ENCODE measurements at regions of chr9 and their contacts with region 1.

Region 1: GRCh38 chr9:68895741-68896478 is 118.0 kb downstream of the PRKACG start:
- DNase-seq: peak in 7 of 9 donors; percentile 26 to 79 (median 70)
- ATAC-seq: peak; percentile 81
- H3K4me3 ChIP-seq: peak overlapping the region; percentile 15
- H3K4me3 Mint-ChIP-seq: peak overlapping the region; percentile 3 to 89 (median 77)
- H3K27ac ChIP-seq: peak overlapping the region; percentile 64
- H3K27ac Mint-ChIP-seq: peak overlapping the region; percentile 86 to 95 (median 91)
- H3K4me1 ChIP-seq: peaks cover 0 to 26% of the 10 kb centered on the region in 2 donors
- H3K4me1 Mint-ChIP-seq: peaks cover 33 to 68% (median 62%) of the 10 kb centered on the region in 7 donors
- H3K27me3 ChIP-seq: no peaks in the 10 kb centered on the region
- H3K27me3 Mint-ChIP-seq: no peaks in the 10 kb centered on the region

Region 2: GRCh38 chr9:68844631-68845612 is 51.0 kb before region 1 on chr9:
- CTCF ChIA-PET with region 1: no interaction called
- POLR2A ChIA-PET with region 1: no interaction called
- intact Hi-C with region 1: loop called in 1 of 2 experiments (anchors 5 kb)
- DNase-seq: peak in 1 of 9 donors; percentile 15
- ATAC-seq: peak; percentile 57
- H3K4me3 ChIP-seq: no peak overlapping the region
- H3K4me3 Mint-ChIP-seq: peak overlapping the region in 3 of 10 donors; percentile 15 to 43 (median 17)
- H3K27ac ChIP-seq: no peak overlapping the region
- H3K27ac Mint-ChIP-seq: peak overlapping the region in 1 of 9 donors; percentile 23
- H3K4me1 ChIP-seq: no peaks in the 10 kb centered on the region
- H3K4me1 Mint-ChIP-seq: peaks cover 0 to 14% (median 5%) of the 10 kb centered on the region in 7 donors
- H3K27me3 ChIP-seq: no peaks in the 10 kb centered on the region
- H3K27me3 Mint-ChIP-seq: peaks cover 0 to 7% (median 0%) of the 10 kb centered on the region in 5 donors

Region 3: DNA sequence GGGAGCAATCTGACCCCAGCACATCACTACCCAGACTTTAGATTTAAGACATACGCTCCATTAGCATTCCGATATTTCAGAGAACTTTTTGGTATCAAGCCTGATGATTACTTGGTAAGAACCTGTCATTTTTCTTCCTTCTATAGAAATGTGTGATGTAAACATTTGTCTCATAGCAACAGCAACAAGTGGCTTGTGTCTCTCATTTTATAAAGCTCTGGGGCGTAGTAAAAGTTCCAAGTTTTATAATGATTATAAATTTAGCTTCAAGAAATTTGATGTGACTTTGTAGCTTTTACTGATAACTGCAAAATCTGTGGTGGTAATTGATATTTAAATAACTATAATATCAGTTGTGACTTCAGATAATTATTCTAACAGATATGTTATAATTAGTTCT is 19.2 kb before region 1 on chr9:
- CTCF ChIA-PET with region 1: no interaction called
- POLR2A ChIA-PET with region 1: no interaction called
- intact Hi-C with region 1: no loop called
- DNase-seq: no peak
- ATAC-seq: no peak
- H3K4me3 ChIP-seq: no peak overlapping the region
- H3K4me3 Mint-ChIP-seq: no peak overlapping the region
- H3K27ac ChIP-seq: no peak overlapping the region
- H3K27ac Mint-ChIP-seq: no peak overlapping the region
- H3K4me1 ChIP-seq: no peaks in the 10 kb centered on the region
- H3K4me1 Mint-ChIP-seq: peaks cover 0 to 2% (median 0%) of the 10 kb centered on the region in 7 donors
- H3K27me3 ChIP-seq: no peaks in the 10 kb centered on the region
- H3K27me3 Mint-ChIP-seq: peaks cover 0 to 2% (median 0%) of the 10 kb centered on the region in 5 donors

Region 4: GRCh38 chr9:68981789-68982188 is 85.9 kb after region 1 on chr9:
- CTCF ChIA-PET with region 1: no interaction called
- POLR2A ChIA-PET with region 1: no interaction called
- intact Hi-C with region 1: loop called in 1 of 2 experiments (anchors 5 kb)
- DNase-seq: no peak
- ATAC-seq: no peak
- H3K4me3 ChIP-seq: no peak overlapping the region
- H3K4me3 Mint-ChIP-seq: no peak overlapping the region
- H3K27ac ChIP-seq: no peak overlapping the region
- H3K27ac Mint-ChIP-seq: peak overlapping the region in 1 of 9 donors; percentile 47
- H3K4me1 ChIP-seq: no peaks in the 10 kb centered on the region
- H3K4me1 Mint-ChIP-seq: peaks cover 7 to 52% (median 17%) of the 10 kb centered on the region in 7 donors
- H3K27me3 ChIP-seq: no peaks in the 10 kb centered on the region
- H3K27me3 Mint-ChIP-seq: no peaks in the 10 kb centered on the region

Region 5: DNA sequence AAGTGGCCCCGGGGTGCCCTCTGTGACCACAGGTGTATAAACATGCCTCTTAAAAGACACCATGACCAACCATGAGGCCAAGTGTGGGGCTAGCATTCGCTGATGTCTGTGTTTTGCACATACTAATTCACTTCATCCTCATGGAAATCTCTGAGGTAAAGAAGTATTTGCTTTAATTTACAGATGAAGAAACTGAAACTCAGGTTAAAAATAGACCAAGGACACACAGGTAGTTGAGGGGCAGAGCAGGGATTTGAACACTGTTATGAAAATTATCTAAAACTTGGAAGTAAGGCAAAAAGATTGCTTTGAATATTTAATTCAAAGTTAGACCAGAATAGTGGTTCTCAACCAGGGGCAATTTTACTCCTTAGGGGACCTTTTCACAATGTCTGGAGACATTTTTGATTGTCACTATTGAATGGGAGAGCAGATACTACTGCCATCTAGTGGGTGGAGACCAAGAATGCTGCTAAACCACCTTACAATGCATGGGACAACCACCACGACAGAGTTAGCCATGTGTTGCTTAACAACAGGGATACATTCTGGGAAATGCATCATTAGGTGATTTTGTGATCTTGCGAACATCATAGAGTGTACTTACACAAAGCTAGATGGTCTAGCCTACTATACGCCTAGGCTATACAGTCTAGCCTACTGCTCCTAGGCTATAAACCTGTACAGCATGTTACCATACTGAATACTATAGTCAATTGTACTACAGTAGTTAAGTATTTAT is 131.6 kb after region 1 on chr9:
- CTCF ChIA-PET with region 1: interaction called, 5 read pairs
- POLR2A ChIA-PET with region 1: no interaction called
- intact Hi-C with region 1: loop called (anchors 2 to 5 kb)
- DNase-seq: peak in 7 of 9 donors; percentile 27 to 67 (median 61)
- ATAC-seq: peak; percentile 88
- H3K4me3 ChIP-seq: no peak overlapping the region
- H3K4me3 Mint-ChIP-seq: peak overlapping the region in 7 of 10 donors; percentile 6 to 61 (median 31)
- H3K27ac ChIP-seq: no peak overlapping the region
- H3K27ac Mint-ChIP-seq: peak overlapping the region in 8 of 9 donors; percentile 2 to 88 (median 62)
- H3K4me1 ChIP-seq: peaks cover 9 to 37% of the 10 kb centered on the region in 2 donors
- H3K4me1 Mint-ChIP-seq: peaks cover 33 to 69% (median 61%) of the 10 kb centered on the region in 7 donors
- H3K27me3 ChIP-seq: no peaks in the 10 kb centered on the region
- H3K27me3 Mint-ChIP-seq: peaks cover 0 to 12% (median 0%) of the 10 kb centered on the region in 5 donors

Measured in naive thymus-derived CD4-positive, alpha-beta T cell (primary cell).